ENCODE measurements at regions of chr6 and their contacts with region 1.

Region 1: GRCh38 chr6:130620338-130620781 is 206.8 kb upstream of the SMLR1 start:
- DNase-seq: no peak
- H3K4me3 Mint-ChIP-seq: no peak overlapping the region
- H3K27ac Mint-ChIP-seq: no peak overlapping the region
- H3K4me1 Mint-ChIP-seq: peaks cover 43% of the 10 kb centered on the region
- H3K27me3 Mint-ChIP-seq: no peaks in the 10 kb centered on the region

Region 2: DNA sequence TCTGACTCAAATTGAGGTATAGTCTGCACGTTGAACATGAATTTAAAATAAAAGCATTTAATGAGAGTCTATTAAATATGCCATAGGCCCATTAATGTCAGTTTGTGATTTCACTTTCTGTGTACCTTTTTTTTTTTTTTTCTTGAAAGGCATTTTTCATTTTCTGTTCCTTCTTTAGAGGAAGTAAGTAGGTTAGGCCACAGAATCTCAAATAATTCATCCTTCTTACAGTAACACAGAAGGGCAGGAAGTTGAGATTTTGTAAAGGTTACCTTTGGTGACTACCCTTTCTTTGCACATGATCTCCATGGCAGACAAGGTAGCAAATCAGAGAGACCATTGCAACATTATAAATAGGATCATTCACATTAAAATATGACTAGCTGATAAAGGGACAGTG is 592.4 kb before region 1 on chr6:
- intact Hi-C with region 1: loop called (anchors 5 kb)
- DNase-seq: no peak
- H3K4me3 Mint-ChIP-seq: peak overlapping the region; percentile 23
- H3K27ac Mint-ChIP-seq: peak overlapping the region; percentile 61
- H3K4me1 Mint-ChIP-seq: peaks cover 37% of the 10 kb centered on the region
- H3K27me3 Mint-ChIP-seq: peaks cover under 1% of the 10 kb centered on the region

Region 3: DNA sequence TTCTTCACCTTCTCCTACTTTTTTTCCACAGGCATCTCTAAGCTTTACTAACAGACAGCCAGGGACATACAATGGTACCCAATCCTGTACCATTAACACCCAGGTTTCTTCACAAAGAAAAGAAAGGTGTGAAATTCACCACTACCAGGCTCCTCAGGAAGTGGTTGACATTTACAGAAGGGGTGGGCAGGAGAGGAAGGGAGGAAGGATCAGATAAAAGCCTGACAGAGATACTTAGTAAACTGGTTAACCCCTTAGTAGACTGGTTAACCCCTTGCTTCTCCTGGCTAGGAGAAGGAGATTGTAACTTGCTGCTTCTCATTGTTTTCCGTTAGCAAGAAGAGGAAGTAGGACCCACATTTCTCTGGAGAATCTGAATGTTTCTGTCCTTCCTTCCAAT is 404.8 kb before region 1 on chr6:
- intact Hi-C with region 1: no loop called
- DNase-seq: peak; percentile 49
- H3K4me3 Mint-ChIP-seq: peak overlapping the region; percentile 70
- H3K27ac Mint-ChIP-seq: peak overlapping the region; percentile 67
- H3K4me1 Mint-ChIP-seq: peaks cover 70% of the 10 kb centered on the region
- H3K27me3 Mint-ChIP-seq: no peaks in the 10 kb centered on the region

Region 4: GRCh38 chr6:130575971-130576370 is 44.4 kb before region 1 on chr6:
- intact Hi-C with region 1: loop called (anchors 2 kb)
- DNase-seq: peak; percentile 74
- H3K4me3 Mint-ChIP-seq: peak overlapping the region; percentile 62
- H3K27ac Mint-ChIP-seq: peak overlapping the region; percentile 72
- H3K4me1 Mint-ChIP-seq: peaks cover 48% of the 10 kb centered on the region
- H3K27me3 Mint-ChIP-seq: no peaks in the 10 kb centered on the region

Region 5: GRCh38 chr6:130587778-130588520 is 32.4 kb before region 1 on chr6:
- intact Hi-C with region 1: no loop called
- DNase-seq: no peak
- H3K4me3 Mint-ChIP-seq: no peak overlapping the region
- H3K27ac Mint-ChIP-seq: no peak overlapping the region
- H3K4me1 Mint-ChIP-seq: peaks cover 39% of the 10 kb centered on the region
- H3K27me3 Mint-ChIP-seq: peaks cover 3% of the 10 kb centered on the region

Region 6: DNA sequence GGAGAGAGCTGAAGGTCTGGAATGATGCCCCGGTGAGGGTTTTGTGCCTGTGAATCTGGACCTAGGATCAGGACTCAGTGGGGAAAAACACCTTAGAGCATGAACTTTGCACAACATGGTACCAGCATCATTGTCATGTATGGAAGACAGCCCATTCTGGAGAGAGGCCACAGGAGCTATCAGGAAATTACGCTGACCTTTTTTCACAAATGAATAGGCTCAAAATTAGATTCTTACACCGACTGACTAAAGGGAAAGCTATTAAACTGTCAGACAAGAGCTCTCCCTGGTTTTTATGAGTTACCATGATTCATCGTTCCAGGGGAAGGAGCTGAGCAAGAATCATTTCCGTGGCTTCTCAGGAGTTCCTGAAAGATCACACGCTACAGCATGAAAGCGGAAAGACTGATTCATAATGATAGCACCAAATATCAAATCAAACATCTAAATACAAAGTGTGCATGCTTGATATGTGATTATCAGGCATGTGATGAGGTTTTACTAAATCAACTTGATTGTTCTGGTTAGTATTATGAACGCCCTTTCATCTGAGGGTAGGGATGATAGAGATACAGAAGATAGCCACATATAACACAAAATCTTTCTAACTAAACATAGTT is 18.1 kb before region 1 on chr6:
- intact Hi-C with region 1: loop called (anchors 1 kb)
- DNase-seq: no peak
- H3K4me3 Mint-ChIP-seq: peak overlapping the region; percentile 31
- H3K27ac Mint-ChIP-seq: peak overlapping the region; percentile 25
- H3K4me1 Mint-ChIP-seq: peaks cover 31% of the 10 kb centered on the region
- H3K27me3 Mint-ChIP-seq: no peaks in the 10 kb centered on the region

Measured in activated T-helper 1 cell treated with anti-CD3 and anti-CD28 coated beads, Interleukin-12 subunit alpha, Interleukin-12 subunit beta, Interleukin-2, Interleukin-4 antibody, amounts not matched to agents 30 ng/mL and 10 ng/mL and 1 ng/mL, durations not matched to agents 14 hours and 24 hours and 36 hours (primary cell).